Dorsolateral prefrontal cortex (tissue), 120 donors: ENCODE measurements at regions of chr7 and their contacts with region 1.

Region 1: DNA sequence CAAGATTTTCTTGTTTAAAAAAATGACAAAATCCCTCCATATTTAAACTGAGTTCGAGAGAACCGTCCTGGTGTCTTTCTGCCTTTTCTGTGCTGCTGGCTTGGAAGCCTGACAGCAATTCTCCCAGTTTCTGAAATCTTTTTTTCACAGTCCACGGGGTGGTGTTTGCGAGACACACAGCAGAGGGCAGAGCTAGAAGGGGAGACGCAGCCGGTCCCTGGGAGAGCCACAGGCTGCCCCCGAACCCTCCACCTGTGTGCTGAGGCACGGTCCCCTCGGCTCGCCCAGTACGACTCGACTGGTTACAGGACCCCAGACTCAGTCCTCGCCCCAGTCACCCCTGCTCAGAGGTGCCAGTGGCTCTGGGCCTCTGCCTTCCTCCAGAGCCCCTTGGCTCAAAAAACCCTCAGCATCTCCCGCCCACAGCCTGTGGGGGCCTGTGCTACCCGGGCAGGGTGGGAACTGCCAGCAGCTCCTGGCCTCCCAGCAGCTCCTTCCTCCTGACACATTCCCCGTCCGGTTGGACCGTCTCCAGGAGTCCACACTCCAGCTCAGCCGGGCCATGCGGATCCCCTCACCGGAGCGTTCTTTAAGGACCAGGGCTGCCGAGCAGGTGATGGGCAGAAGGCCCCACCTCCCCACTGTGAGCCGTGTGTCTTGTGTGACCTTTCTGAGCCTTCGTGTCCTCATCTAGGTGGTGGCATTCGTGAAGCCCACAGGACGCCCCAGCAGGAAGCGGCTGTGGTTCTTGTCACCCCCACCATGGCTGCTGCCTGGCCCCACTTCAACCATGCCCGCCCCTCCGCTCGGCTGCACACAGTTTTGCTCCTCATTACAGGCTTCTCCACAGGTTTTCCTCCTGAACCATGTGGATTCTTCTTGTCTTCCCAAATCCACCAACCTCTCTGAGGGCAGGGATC is 52.3 kb upstream of the EN2 start:
- DNase-seq: peak in 3 of 10 donors; percentile 19 to 71 (median 36)
- H3K4me3 ChIP-seq: peak overlapping the region in 4 of 59 donors; percentile 37 to 75 (median 66)
- H3K27ac ChIP-seq: peak overlapping the region in 7 of 59 donors; percentile 46 to 97 (median 84)
- H3K27me3 ChIP-seq: peaks cover 0 to 78% (median 43%) of the 10 kb centered on the region in 45 donors
- CTCF ChIP-seq: peak in 37 of 56 donors; percentile 9 to 73 (median 38)

Region 2: DNA sequence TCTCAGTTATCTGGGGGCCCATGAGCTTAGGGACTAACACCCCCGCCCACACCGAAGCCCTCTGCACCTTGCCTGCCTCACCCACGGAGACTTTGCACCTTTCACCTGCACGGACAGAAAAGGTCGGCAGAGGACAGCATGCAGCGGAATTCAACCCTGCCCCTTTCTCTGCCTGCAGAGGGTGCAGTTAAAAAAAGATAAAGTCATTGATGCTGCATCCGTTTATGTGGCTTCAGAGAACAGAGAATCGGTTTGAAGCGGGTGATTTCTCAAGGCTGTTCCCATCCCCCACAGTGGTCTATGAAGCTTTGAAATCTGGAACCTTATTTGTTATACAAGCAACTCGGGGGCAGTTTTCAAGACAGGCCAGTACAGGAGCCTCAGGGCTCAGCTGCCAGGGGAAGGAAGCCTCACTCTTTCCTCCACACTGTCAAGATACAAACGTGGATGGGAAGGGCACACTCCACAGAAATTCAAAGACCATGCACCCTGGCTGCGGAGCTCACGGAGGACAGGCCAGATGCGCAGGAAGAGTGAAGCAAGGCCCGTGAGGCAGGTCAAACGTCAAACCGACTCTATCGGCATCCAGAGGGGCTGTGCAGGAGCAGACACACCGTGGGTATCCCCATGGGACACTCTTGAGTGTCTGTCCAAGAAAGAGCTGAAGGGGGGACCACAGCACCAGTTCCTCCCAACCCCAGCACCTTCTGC is 41.7 kb before region 1 on chr7:
- intact Hi-C with region 1: no loop called
- DNase-seq: peak in 2 of 10 donors; percentile 21 to 23
- H3K4me3 ChIP-seq: no peak overlapping the region
- H3K27ac ChIP-seq: no peak overlapping the region
- H3K27me3 ChIP-seq: peaks cover 0 to 53% (median 14%) of the 10 kb centered on the region in 45 donors
- CTCF ChIP-seq: no peak

Region 3: GRCh38 chr7:155533827-155534690 is 128.4 kb after region 1 on chr7:
- intact Hi-C with region 1: loop called in 1 of 2 experiments (anchors 10 kb)
- DNase-seq: peak in 2 of 10 donors; percentile 35 to 60
- H3K4me3 ChIP-seq: peak overlapping the region in 55 of 59 donors; percentile 15 to 68 (median 49)
- H3K27ac ChIP-seq: peak overlapping the region in 1 of 59 donors; percentile 83
- H3K27me3 ChIP-seq: peaks cover 0 to 62% (median 39%) of the 10 kb centered on the region in 45 donors
- CTCF ChIP-seq: peak in 48 of 56 donors; percentile 13 to 57 (median 38)